ENCODE measurements at regions of chr2 and their contacts with region 1.

Region 1: GRCh38 chr2:235766278-235766677 is 272.4 kb downstream of the AGAP1 start:
- DNase-seq: peak in 4 of 10 donors; percentile 62 to 83 (median 74)
- H3K4me3 ChIP-seq: no peak overlapping the region
- H3K27ac ChIP-seq: peak overlapping the region in 37 of 59 donors; percentile 5 to 77 (median 52)
- H3K27me3 ChIP-seq: no peaks in the 10 kb centered on the region
- CTCF ChIP-seq: peak; percentile 89 to 99 (median 95)

Region 2: DNA sequence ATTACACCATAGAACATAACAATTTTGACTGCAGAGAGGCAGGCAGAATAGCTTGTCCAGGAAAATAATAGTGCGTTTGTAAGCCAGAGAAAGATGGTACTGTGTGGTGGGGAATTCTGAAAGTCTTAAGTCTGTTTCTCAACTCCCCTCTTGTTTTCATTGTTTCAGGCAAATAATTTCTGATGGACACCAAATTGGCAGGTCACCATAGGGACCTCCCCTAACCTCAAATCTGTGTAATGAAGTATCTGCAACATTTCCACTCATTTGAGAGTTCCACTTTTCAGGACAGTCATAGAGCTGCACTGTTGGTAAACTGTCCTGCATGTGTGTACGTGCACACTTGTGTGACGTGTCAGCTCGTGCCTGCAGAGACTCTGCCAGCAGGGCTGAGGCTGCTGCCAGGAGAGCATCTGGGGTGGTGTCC is 76.8 kb before region 1 on chr2:
- intact Hi-C with region 1: no loop called
- DNase-seq: peak in 4 of 10 donors; percentile 32 to 70 (median 43)
- H3K4me3 ChIP-seq: peak overlapping the region in 13 of 59 donors; percentile 1 to 44 (median 12)
- H3K27ac ChIP-seq: peak overlapping the region in 58 of 59 donors; percentile 21 to 90 (median 80)
- H3K27me3 ChIP-seq: no peaks in the 10 kb centered on the region
- CTCF ChIP-seq: no peak

Region 3: GRCh38 chr2:235893129-235893698 is 126.9 kb after region 1 on chr2:
- intact Hi-C with region 1: no loop called
- DNase-seq: no peak
- H3K4me3 ChIP-seq: no peak overlapping the region
- H3K27ac ChIP-seq: no peak overlapping the region
- H3K27me3 ChIP-seq: no peaks in the 10 kb centered on the region
- CTCF ChIP-seq: no peak

Region 4: GRCh38 chr2:236180831-236181453 is 414.7 kb after region 1 on chr2:
- intact Hi-C with region 1: loop called in 1 of 2 experiments (anchors 5 kb)
- DNase-seq: peak in 4 of 10 donors; percentile 25 to 69 (median 40)
- H3K4me3 ChIP-seq: no peak overlapping the region
- H3K27ac ChIP-seq: no peak overlapping the region
- H3K27me3 ChIP-seq: peaks cover 12 to 79% (median 61%) of the 10 kb centered on the region in 45 donors
- CTCF ChIP-seq: peak; percentile 45 to 87 (median 71)

Measured in dorsolateral prefrontal cortex (tissue), 120 donors.